ENCODE measurements at regions of chr9 and their contacts with region 1.

Region 1: DNA sequence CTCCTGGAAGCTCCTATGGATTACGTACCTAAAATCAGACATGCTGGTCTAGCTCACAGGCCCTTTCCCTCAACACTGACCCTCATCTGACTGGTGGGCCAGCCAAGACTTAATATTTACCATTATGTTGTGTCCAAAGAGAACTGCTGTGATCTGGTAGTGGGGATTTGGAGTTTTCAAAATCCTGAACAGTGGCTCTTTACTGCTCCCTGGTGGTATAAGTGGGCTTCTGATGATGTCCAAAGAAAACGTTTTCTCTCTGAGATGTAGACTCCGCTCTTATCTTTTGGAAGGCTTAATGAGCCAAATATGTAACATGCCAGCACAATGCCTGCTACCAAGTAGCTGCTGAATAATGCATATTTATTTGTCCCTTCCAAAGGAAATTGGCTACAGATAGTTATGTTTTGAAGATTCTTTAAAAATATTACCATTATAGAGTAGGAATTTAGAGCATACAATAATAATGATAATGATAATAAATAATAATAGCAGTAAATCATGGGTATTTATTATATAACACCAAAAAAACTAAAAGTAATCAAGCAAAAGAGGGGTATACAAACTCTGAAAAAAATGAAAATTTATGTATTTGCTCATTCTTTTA is 406.6 kb upstream of the TNC start:
- DNase-seq: peak in 1 of 2 donors; percentile 31
- ATAC-seq: peak in 6 of 8 donors; percentile 37 to 63 (median 48)
- H3K4me3 ChIP-seq: no peak overlapping the region
- H3K27ac ChIP-seq: no peak overlapping the region
- H3K4me1 ChIP-seq: peaks cover 0 to 4% (median 0%) of the 10 kb centered on the region in 9 donors
- H3K27me3 ChIP-seq: peaks cover 0 to 5% (median 0%) of the 10 kb centered on the region in 7 donors
- CTCF ChIP-seq: peak; percentile 20 to 74 (median 61)

Region 2: DNA sequence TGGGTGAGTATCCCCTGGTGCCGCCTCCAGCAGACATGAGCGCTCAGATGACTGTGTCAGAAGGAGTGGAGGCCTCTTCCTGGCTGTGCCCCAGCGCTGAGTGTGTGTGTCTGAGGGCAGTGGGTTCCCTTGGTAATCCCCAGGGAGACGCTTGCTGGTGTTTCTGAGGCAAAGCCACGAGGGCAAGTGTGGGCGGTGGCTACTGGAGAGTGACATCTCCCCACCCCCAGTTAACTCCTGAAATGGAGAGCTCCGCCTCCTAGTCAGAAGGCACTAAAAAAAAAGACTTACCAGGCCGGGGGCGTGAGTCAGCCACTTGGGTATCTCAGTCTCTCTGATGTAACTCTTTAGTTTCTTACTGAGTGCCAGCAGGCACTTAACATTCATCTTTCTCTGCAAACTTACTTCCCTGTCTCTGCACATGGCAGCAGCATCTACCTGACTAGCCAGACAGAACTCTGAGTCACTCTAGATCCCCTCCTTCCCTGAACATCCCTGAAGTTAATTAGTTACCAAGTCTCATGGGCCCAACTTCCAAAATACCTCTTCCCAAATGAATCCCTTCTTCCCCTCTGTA is 1175.6 kb before region 1 on chr9:
- intact Hi-C with region 1: no loop called
- DNase-seq: peak; percentile 41 to 43
- ATAC-seq: peak; percentile 27 to 87 (median 70)
- H3K4me3 ChIP-seq: no peak overlapping the region
- H3K27ac ChIP-seq: peak overlapping the region in 2 of 10 donors; percentile 16 to 53
- H3K4me1 ChIP-seq: peaks cover 0 to 28% (median 8%) of the 10 kb centered on the region in 9 donors
- H3K27me3 ChIP-seq: no peaks in the 10 kb centered on the region
- CTCF ChIP-seq: no peak

Region 3: DNA sequence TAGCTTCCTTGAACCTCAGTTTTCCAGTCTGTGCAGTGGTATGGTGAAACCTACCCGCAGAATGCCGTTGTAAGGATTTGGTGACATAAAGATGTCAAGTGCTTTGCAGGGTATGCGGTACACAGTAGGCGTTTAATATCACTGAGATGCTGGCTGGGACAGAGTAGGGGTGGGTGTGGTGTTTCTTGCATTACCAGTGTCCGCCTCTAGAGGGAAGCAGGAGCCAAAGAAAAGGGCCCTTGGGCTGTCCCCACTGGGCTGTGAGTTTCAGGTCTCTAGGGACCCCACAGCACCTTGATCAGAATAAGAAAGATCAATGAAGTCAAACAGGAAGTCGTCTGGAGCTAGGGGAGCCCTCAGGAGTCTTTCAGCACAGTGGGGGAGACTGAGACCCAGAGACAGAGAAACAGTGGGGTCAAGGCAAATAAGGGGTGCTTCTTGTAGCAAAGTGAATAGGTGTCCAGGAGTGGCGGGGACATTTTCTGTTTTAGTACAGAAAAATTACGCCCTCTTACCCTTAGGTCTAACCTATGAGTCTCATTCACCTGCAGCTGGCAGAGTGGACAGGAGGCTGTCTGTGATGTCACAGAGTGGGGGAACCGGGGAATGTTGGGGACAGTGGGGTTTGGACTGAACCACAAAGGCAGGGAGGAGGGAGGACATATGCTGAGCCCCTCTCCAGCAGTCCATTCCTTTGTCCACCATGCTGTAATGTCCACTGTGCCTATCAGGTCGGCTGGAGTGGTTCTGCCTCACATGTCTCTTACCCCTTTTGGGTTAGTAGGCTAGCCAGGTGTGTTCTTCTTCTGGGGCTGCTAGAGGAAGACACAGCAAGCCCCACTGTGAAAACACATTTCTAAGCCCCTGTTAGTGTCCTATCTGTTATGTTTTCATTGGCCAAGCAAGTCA is 862.2 kb before region 1 on chr9:
- intact Hi-C with region 1: loop called in 1 of 10 experiments (anchors 5 kb)
- DNase-seq: peak in 1 of 2 donors; percentile 31
- ATAC-seq: peak in 7 of 8 donors; percentile 67 to 81 (median 75)
- H3K4me3 ChIP-seq: no peak overlapping the region
- H3K27ac ChIP-seq: no peak overlapping the region
- H3K4me1 ChIP-seq: no peaks in the 10 kb centered on the region
- H3K27me3 ChIP-seq: peaks cover 0 to 40% (median 23%) of the 10 kb centered on the region in 7 donors
- CTCF ChIP-seq: peak; percentile 58 to 88 (median 73)

Region 4: GRCh38 chr9:114738581-114739316 is 785.8 kb before region 1 on chr9:
- intact Hi-C with region 1: loop called in 1 of 10 experiments (anchors 10 kb)
- DNase-seq: peak; percentile 21 to 69
- ATAC-seq: peak in 7 of 8 donors; percentile 79 to 96 (median 85)
- H3K4me3 ChIP-seq: no peak overlapping the region
- H3K27ac ChIP-seq: no peak overlapping the region
- H3K4me1 ChIP-seq: peaks cover 0 to 13% (median 0%) of the 10 kb centered on the region in 9 donors
- H3K27me3 ChIP-seq: peaks cover 0 to 13% (median 3%) of the 10 kb centered on the region in 7 donors
- CTCF ChIP-seq: peak; percentile 49 to 86 (median 76)

Region 5: DNA sequence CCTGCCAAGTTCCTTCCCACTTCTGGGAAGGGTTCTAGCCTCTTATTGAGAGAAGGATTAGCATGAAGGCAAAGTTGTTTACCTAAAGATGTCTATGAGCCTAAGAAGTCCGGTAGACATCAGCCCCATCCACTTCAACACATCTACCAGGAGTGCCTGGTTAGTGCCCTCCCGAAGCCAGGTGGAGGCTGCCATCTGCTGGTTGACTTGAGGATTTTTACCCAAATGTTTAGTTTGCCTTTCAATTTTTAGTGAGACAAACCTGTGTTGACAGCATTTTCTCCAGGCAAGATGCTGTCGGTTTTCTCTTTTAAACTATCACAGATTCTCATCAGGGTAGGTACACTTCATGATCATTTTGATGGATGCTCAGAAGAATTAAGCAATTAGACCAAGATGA is 510.6 kb before region 1 on chr9:
- intact Hi-C with region 1: loop called in 3 of 10 experiments (anchors 10 kb)
- DNase-seq: peak; percentile 55 to 68
- ATAC-seq: peak in 7 of 8 donors; percentile 58 to 84 (median 80)
- H3K4me3 ChIP-seq: no peak overlapping the region
- H3K27ac ChIP-seq: no peak overlapping the region
- H3K4me1 ChIP-seq: peaks cover 0 to 15% (median 0%) of the 10 kb centered on the region in 9 donors
- H3K27me3 ChIP-seq: peaks cover 0 to 34% (median 15%) of the 10 kb centered on the region in 7 donors
- CTCF ChIP-seq: peak; percentile 60 to 84 (median 79)

Region 6: DNA sequence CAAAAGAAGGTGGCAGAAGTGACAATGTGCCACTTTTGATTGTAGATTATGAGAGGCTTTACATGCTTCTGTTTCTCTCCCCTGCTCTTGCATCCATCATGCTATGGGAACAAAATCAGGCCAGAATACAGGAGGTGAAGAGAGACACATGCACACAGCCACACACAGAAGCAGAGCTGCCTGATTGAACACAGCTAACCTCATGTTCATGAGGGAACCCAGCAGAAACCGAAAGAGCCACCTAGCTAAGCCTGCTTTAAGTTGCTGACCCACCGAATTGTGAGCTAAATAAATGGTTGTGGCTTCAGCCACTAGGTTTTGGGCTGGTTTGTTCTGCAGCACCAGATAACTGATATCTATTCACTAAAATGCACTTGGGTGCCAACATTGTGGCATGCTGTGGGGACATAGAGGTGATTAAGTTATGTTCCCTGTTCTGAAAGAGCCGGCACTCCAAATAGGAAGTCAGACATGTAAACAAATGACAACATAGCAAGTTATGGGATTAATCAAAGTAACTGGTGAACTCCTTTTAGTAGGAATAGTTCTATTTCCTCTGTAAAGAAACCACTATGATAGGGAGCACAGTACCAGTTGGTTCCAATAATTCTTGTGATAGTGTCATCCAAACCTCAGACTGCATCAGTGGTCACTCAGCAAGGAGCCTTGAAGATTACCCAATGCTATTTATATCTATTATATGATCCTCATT is 313.0 kb before region 1 on chr9:
- intact Hi-C with region 1: loop called in 1 of 10 experiments (anchors 10 kb)
- DNase-seq: no peak
- ATAC-seq: peak in 3 of 8 donors; percentile 28 to 42 (median 30)
- H3K4me3 ChIP-seq: no peak overlapping the region
- H3K27ac ChIP-seq: peak overlapping the region in 1 of 10 donors; percentile 51
- H3K4me1 ChIP-seq: peaks cover 0 to 20% (median 4%) of the 10 kb centered on the region in 9 donors
- H3K27me3 ChIP-seq: peaks cover 0 to 6% (median 0%) of the 10 kb centered on the region in 7 donors
- CTCF ChIP-seq: no peak

Region 7: GRCh38 chr9:115359017-115359780 is 165.4 kb before region 1 on chr9:
- intact Hi-C with region 1: no loop called
- DNase-seq: no peak
- ATAC-seq: no peak
- H3K4me3 ChIP-seq: no peak overlapping the region
- H3K27ac ChIP-seq: no peak overlapping the region
- H3K4me1 ChIP-seq: no peaks in the 10 kb centered on the region
- H3K27me3 ChIP-seq: no peaks in the 10 kb centered on the region
- CTCF ChIP-seq: no peak

Measured in heart right ventricle (tissue), 16 donors.